Pancreas (tissue), 10 donors: ENCODE measurements at regions of chr12 and their contacts with region 1.

Region 1: DNA sequence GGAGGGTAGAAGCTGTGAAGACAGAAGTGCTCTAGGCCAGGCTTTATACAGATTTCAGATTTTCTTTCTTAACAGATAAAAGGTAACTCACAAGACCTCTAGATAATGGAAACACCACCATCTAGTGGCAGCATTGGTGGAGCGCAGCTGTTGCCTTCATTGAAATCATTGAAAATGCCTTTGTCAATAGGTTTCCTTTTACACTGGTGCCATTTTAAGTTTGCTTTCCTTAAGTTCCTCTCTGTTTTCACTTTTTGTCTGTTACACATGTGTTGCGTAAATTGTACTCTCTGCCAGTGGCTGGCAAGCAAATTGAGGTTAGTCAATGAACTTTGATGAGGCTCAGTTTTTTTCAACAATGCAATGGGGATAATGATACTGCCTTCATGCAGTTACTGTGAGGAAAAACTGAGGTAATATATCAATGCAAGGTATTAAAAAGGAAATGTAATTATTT is 31.1 kb downstream of the ALDH1L2 start:
- DNase-seq: peak in 5 of 6 donors; percentile 53 to 81 (median 65)
- ATAC-seq: peak; percentile 75 to 95 (median 92)
- H3K4me3 ChIP-seq: no peak overlapping the region
- H3K27ac ChIP-seq: no peak overlapping the region
- H3K4me1 ChIP-seq: peaks cover 0 to 6% (median 4%) of the 10 kb centered on the region in 3 donors
- H3K27me3 ChIP-seq: no peaks in the 10 kb centered on the region
- CTCF ChIP-seq: peak; percentile 75 to 84 (median 80)

Region 2: DNA sequence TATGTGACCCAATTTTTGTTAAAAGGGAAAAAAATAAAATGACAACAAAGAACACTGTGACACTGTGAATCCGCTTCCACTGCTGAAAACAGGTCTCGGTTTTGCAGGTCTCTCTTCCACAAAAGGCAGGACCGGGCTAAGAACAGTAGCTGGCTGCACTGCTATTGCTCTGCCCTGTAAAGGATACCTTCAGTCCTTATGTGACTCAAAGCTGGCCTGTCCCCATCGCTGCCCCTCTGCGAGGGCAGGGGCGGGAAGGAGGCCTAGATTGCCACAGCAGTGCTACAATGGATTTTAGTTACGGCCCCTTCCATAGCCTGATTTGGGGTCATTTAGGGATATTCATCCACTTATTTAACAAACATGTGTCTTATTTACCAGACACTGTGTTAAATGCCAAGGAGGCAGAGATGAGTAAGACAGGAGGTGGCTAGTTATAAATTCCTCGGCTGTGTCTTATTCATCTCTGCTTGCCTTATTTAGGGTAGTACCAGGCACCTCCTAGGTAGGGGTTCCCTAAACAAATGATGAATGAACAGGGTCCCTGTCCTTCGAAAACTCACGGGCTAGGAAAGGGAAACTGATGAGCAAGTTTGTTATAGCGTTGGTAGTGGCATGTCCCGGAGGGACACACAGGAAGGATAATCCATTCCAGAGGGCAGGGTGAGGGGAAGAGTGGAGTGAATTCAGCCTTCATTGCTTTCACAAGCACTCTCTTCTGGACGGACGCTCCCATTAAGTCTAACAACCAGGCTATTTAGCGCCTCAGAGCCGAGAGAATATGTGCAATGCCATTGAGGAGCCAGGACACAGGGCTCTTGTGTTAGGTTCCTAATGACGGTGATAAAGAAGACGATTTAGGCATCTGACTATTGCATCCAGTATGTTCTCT is 676.2 kb before region 1 on chr12:
- intact Hi-C with region 1: loop called in 2 of 3 experiments (anchors 5 kb)
- DNase-seq: no peak
- ATAC-seq: no peak
- H3K4me3 ChIP-seq: no peak overlapping the region
- H3K27ac ChIP-seq: no peak overlapping the region
- H3K4me1 ChIP-seq: no peaks in the 10 kb centered on the region
- H3K27me3 ChIP-seq: no peaks in the 10 kb centered on the region
- CTCF ChIP-seq: no peak

Region 3: DNA sequence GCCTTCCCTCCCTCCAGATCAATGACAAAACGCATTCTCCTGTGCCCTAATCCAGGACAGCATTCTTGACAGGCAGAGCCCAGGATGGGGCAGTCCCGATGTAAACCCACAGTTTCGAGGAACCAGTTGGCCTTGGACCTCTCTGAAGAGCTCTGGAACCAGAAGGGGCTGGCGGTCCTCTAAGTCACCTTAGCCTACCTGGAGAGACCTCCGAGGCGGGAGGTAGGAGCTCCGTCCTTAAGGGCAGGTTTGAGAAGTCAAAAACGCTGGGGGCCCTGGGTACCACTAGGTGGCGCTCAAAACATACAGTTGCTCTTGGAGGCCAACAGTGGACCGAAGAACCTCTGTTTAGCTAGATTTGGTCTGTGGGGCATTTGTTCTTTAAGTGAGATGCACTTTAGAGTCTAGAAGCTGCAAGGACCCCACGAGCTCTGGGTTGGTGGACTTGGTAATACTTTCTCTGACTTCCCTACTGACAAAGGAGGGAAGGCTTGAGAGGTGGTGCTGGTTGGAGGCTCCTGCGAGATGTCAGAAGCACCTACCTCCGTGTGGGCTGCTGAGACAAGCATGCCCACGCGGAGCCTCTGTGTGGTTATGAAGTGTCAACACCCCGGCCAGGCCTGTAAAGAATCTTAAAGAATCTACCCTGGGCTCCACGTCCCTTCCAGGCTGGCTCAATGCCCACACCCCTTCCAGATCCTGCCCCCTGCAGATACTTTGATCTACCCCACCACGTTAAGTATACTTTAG is 671.2 kb before region 1 on chr12:
- intact Hi-C with region 1: loop called in 2 of 3 experiments (anchors 5 kb)
- DNase-seq: peak; percentile 67 to 88 (median 83)
- ATAC-seq: peak; percentile 88 to 99 (median 96)
- H3K4me3 ChIP-seq: no peak overlapping the region
- H3K27ac ChIP-seq: no peak overlapping the region
- H3K4me1 ChIP-seq: no peaks in the 10 kb centered on the region
- H3K27me3 ChIP-seq: no peaks in the 10 kb centered on the region
- CTCF ChIP-seq: peak; percentile 89 to 91 (median 90)

Region 4: DNA sequence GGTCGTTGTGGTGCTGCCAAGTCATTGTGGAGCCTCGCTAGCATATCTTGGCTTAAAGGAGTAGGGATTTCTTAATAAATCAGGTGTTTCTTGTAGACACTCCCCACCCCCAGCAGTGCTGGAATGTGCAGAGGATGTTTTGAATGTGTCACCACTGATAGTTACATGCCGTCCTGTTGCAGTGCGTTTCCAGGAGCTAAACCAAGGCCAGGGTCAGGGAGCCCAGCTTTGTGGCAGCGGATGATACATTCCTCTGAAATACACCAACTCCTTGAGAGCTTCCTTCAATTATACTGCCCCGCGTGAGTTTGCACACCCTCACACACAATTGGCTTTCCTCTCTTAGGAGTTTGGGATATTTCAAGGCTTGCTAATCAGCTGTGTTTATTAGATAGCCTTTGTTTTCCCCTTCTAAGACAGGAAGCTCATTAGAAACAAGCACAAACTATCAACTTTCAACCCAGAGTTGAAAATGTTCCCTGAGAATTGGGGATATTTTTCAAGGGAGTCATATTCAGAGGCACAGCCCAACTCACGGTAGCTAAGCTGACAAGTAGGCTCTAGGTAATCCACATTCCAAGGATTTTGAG is 432.3 kb after region 1 on chr12:
- intact Hi-C with region 1: no loop called
- DNase-seq: no peak
- ATAC-seq: no peak
- H3K4me3 ChIP-seq: no peak overlapping the region
- H3K27ac ChIP-seq: no peak overlapping the region
- H3K4me1 ChIP-seq: no peaks in the 10 kb centered on the region
- H3K27me3 ChIP-seq: no peaks in the 10 kb centered on the region
- CTCF ChIP-seq: no peak